Activated naive CD4-positive, alpha-beta T cell treated with anti-CD3 and anti-CD28 coated beads, Interleukin-2, amount 10 ng/mL, durations not matched to agents 7 days and 5 days (primary cell): ENCODE measurements at regions of chr20 and their contacts with region 1.

Region 1: DNA sequence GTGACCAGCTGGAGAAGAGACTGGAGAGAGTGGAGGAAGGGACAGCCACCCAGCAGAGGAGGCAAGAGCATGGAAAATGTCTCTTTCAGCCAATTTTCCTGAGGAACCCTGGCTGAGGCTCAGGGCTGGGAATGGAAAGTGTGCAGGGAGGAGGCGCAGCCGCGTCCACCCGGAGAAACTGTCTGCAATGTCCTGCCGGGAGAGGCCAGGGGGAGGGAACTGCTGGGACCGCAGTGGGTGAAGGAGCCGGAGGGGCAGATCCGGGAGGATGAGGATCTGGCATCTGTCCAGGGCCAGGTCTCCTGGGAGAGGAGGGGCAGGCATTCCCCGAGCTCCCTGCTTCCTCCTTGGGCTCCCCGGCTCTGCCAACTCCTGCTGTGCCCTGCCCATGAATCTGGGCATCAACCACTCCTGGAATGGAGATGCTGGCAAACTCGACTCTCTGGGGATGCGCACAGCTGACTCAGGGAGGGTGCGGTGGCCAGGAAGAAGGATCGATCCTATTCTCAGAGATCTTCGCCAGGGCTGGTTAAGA is 17.4 kb upstream of the HM13 start:
- DNase-seq: no peak
- H3K4me3 Mint-ChIP-seq: no peak overlapping the region
- H3K27ac Mint-ChIP-seq: no peak overlapping the region
- H3K4me1 Mint-ChIP-seq: no peaks in the 10 kb centered on the region
- H3K27me3 Mint-ChIP-seq: peaks cover 15% of the 10 kb centered on the region

Region 2: GRCh38 chr20:31452575-31452974 is 44.3 kb before region 1 on chr20:
- CTCF ChIA-PET with region 1: interaction called, 97 read pairs
- DNase-seq: no peak
- H3K4me3 Mint-ChIP-seq: no peak overlapping the region
- H3K27ac Mint-ChIP-seq: no peak overlapping the region
- H3K4me1 Mint-ChIP-seq: no peaks in the 10 kb centered on the region
- H3K27me3 Mint-ChIP-seq: peaks cover 8% of the 10 kb centered on the region

Region 3: DNA sequence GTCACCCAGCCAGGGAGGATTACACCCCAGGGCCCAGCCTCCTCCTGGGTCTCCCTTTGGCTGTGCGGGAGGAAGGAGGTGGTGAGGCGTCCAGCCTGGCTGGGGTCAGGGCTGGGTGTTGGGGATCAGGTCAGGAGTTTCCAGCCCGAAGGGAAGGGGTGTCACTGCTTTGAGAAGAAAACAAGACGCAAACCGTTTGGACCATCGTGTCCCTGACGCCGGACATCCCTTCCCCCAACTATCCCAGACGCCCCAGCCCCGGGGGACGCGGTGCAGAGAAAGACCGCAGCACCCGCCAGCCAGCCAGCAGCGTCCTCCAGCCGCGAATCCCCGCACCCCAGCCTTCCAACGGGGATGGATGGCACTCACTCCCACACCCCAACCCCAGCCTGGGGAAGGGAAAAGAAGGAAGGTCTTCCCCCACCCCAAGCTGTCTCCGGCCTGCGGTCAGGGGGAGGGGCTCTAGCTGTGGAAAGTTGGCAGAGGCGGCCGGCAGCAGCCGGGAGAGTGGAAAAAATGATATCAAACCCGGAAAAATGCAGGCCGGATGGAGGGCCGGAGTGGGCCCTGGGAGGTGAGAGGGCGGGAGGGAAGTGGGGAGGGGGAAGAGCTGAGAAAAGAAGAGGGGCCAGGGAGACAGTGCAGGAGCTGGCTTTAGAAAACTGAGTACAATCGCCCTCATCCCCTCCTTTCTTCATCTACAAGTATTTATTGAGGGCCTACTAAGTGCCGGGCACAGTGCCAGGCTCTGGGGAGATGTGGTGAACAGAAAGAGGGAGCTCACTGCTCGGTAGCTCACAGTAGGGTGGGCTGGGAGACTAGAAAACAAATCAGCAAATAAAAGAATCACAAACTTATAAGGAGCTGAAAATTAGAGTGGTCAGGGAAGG is 11.1 kb before region 1 on chr20:
- CTCF ChIA-PET with region 1: interaction called, 34 read pairs
- DNase-seq: no peak
- H3K4me3 Mint-ChIP-seq: no peak overlapping the region
- H3K27ac Mint-ChIP-seq: no peak overlapping the region
- H3K4me1 Mint-ChIP-seq: no peaks in the 10 kb centered on the region
- H3K27me3 Mint-ChIP-seq: peaks cover 57% of the 10 kb centered on the region